HepG2 (cell line): ENCODE measurements at regions of chr1 and their contacts with region 1.

Region 1: GRCh38 chr1:232385221-232385620 is 244.7 kb downstream of the SIPA1L2 start:
- DNase-seq: no peak
- ATAC-seq: no peak
- H3K4me3 ChIP-seq: no peak overlapping the region
- H3K27ac ChIP-seq: no peak overlapping the region
- H3K4me1 ChIP-seq: no peaks in the 10 kb centered on the region
- H3K27me3 ChIP-seq: peaks cover 0 to 1% of the 10 kb centered on the region in 2 experiments; a peak in 2 of 5 replicates
- CTCF ChIP-seq: no peak
- EP300 ChIP-seq: no peak
- POLR2A ChIP-seq: no peak
- RAD21 ChIP-seq: no peak

Region 2: DNA sequence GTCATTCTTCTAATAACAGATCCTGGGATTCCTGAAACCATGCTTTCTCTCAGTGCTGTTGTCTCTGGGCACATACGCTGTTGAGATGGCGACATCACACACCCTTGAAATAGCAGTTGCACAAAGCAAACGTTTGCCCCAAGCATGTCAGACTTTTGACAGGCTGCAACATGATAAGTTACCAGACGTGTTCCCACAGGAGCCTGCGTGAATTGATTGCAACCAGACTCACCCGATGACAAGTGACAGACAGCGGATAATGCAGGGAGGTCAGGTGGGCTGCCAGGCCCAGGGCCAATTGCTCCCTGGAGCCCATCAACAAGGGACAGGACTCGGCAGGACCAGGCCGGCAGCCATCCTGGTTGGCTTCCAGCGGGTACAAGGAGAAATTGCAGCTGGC is 66.1 kb before region 1 on chr1:
- CTCF ChIA-PET with region 1: no interaction called
- POLR2A ChIA-PET with region 1: no interaction called
- in situ Hi-C with region 1: no loop called
- intact Hi-C with region 1: loop called (anchors 2 kb)
- DNase-seq: no peak
- ATAC-seq: no peak
- H3K4me3 ChIP-seq: no peak overlapping the region
- H3K27ac ChIP-seq: no peak overlapping the region
- H3K4me1 ChIP-seq: no peaks in the 10 kb centered on the region
- H3K27me3 ChIP-seq: no peaks in the 10 kb centered on the region
- CTCF ChIP-seq: no peak
- EP300 ChIP-seq: no peak
- POLR2A ChIP-seq: no peak
- RAD21 ChIP-seq: no peak